GM10248 (cell line): ENCODE measurements at regions of chr2 and their contacts with region 1.

Region 1: DNA sequence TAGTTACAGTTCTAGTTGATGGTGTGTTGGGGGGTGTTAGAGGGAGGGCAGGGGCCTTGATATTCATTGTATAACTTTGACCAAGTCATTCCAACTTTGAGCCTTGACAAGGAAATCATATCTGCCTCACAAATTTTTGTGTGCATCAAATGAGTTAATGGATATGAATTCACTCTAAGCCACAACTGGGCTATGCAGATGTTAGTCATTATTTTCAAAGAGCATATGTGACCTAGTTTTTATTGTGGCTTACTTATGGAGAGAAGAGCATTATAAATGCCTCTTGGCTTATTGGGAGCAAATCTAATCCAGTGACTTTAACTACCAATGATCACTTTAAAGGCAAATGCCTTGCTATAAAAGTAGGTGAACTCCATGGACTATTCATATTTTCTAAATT is 250.2 kb downstream of the LPIN1 start:
- DNase-seq: no peak
- CTCF ChIP-seq: no peak

Region 2: GRCh38 chr2:11977766-11978524 is 18.7 kb before region 1 on chr2:
- CTCF ChIA-PET with region 1: interaction called, 10 read pairs
- POLR2A ChIA-PET with region 1: no interaction called
- DNase-seq: no peak
- CTCF ChIP-seq: no peak